ENCODE measurements at regions of chr11 and their contacts with region 1.

Region 1: GRCh38 chr11:82225930-82226329 is 507.7 kb downstream of the FAM181B start:
- DNase-seq: no peak
- H3K4me3 Mint-ChIP-seq: no peak overlapping the region
- H3K27ac Mint-ChIP-seq: no peak overlapping the region
- H3K4me1 Mint-ChIP-seq: no peaks in the 10 kb centered on the region
- H3K27me3 Mint-ChIP-seq: no peaks in the 10 kb centered on the region

Region 2: DNA sequence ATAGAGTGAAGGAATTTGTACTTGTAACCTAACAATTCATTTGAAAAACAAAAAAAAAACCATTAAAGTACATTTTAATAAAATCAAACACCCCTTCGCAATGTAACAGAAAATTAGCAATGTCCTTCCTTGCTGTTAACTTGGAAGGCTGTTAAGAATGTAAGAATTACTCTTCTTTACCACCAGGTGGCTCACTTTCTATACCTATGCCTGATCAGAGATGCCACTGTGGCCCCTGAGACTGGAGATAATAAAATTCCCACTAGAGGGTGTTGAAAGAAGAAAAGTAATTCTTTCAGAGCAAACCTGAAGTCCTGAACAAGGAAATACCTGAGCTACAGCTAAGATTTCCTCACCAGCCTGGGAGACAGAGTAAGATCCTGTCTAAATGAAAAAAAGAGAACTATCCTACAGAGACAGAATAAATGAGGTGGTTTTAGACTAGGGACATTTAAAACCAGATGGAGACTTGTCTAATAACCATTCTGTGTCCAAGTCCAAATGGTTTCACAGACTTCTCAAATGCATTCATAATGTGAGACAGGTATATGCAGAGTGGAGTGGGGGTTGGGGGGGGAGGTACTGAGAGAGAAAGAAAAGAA is 581.6 kb before region 1 on chr11:
- CTCF ChIA-PET with region 1: interaction called, 14 read pairs
- DNase-seq: peak; percentile 21
- H3K4me3 Mint-ChIP-seq: no peak overlapping the region
- H3K27ac Mint-ChIP-seq: no peak overlapping the region
- H3K4me1 Mint-ChIP-seq: no peaks in the 10 kb centered on the region
- H3K27me3 Mint-ChIP-seq: peaks cover 8% of the 10 kb centered on the region